B cell (primary cell): ENCODE measurements at regions of chr16 and their contacts with region 1.

Region 1: GRCh38 chr16:29641561-29641960 is 21.5 kb upstream of the SPN start:
- DNase-seq: peak; percentile 43
- ATAC-seq: no peak
- H3K4me3 ChIP-seq: no peak overlapping the region
- H3K4me3 Mint-ChIP-seq: no peak overlapping the region
- H3K27ac ChIP-seq: no peak overlapping the region
- H3K27ac Mint-ChIP-seq: peak overlapping the region; percentile 37
- H3K4me1 ChIP-seq: peaks cover 20 to 43% of the 10 kb centered on the region in 2 donors
- H3K4me1 Mint-ChIP-seq: peaks cover 31% of the 10 kb centered on the region
- H3K27me3 ChIP-seq: no peaks in the 10 kb centered on the region
- H3K27me3 Mint-ChIP-seq: no peaks in the 10 kb centered on the region
- CTCF ChIP-seq: no peak

Region 2: GRCh38 chr16:29678691-29679267 is 37.2 kb after region 1 on chr16 and contains the start of gene QPRT:
- CTCF ChIA-PET with region 1: interaction called, 4 read pairs
- POLR2A ChIA-PET with region 1: no interaction called
- intact Hi-C with region 1: loop called (anchors 5 kb)
- DNase-seq: peak; percentile 10
- ATAC-seq: no peak
- H3K4me3 ChIP-seq: peak within 1 kb of the TSS in 2 of 5 experiments; percentile 8 to 19
- H3K4me3 Mint-ChIP-seq: peak within 1 kb of the TSS; percentile 79
- H3K27ac ChIP-seq: no peak within 1 kb of the TSS
- H3K27ac Mint-ChIP-seq: peak within 1 kb of the TSS; percentile 21
- H3K4me1 ChIP-seq: peaks cover 14 to 25% of the 10 kb centered on the region in 2 donors
- H3K4me1 Mint-ChIP-seq: peaks cover 19% of the 10 kb centered on the region
- H3K27me3 ChIP-seq: no peaks in the 10 kb centered on the region
- H3K27me3 Mint-ChIP-seq: no peaks in the 10 kb centered on the region
- CTCF ChIP-seq: no peak
- total RNA-seq, gene QPRT: 0.22 and 0.24 TPM in 2 replicates